Calu3 (cell line): ENCODE measurements at regions of chr13 and their contacts with region 1.

Region 1: DNA sequence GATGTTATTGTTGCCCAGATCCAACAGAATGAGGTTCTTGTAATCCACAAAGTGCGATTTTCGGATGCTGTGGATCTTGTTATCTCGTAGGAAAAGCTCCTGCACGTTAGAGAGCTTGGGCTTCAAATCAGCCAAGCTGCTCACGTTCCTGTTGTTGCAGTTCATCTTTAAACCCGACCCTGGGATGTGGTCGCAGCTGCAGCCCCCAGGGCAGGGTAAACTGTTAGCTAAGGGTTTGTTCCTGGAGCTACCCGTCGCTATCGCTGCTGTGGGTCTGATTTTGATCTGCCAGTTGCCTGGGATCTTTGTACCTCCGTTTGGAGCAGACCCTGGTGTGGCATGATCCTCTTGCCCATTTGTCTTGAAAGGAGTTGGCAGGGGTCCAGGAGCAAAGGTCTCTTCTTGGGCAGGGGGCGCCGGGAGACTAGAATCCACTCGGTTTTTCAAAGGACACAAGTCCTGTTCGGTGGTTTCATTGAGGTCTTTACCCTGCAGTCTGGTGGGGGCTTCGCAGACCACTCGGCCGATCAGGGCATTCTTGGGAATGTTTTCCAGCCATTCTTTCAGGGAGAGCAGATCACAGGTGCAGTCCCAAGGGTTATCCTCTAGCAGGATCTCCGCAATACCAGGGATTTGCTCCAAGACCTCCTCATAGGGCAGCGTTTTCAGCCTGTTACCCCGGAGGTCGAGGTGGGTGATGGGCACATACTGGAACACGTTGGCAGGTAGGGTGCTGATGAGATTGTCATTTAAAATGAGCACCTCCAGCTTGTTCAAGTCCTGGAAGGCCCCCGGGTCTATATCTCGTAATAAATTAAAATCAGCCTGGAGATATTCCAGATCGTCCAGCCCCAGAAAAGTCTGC is 1.8 kb downstream of the SLITRK1 start:
- DNase-seq: no peak
- H3K4me3 Mint-ChIP-seq: peak overlapping the region; percentile 14
- H3K27ac Mint-ChIP-seq: no peak overlapping the region
- H3K4me1 Mint-ChIP-seq: no peaks in the 10 kb centered on the region
- H3K27me3 Mint-ChIP-seq: no peaks in the 10 kb centered on the region
- CTCF ChIP-seq: no peak

Region 2: GRCh38 chr13:83761631-83762030 is 118.9 kb before region 1 on chr13:
- CTCF ChIA-PET with region 1: no interaction called
- intact Hi-C with region 1: no loop called
- DNase-seq: no peak
- H3K4me3 Mint-ChIP-seq: no peak overlapping the region
- H3K27ac Mint-ChIP-seq: no peak overlapping the region
- H3K4me1 Mint-ChIP-seq: no peaks in the 10 kb centered on the region
- H3K27me3 Mint-ChIP-seq: no peaks in the 10 kb centered on the region
- CTCF ChIP-seq: no peak

Region 3: GRCh38 chr13:83810136-83810535 is 70.4 kb before region 1 on chr13:
- CTCF ChIA-PET with region 1: interaction called, 13 read pairs
- intact Hi-C with region 1: no loop called
- DNase-seq: no peak
- H3K4me3 Mint-ChIP-seq: no peak overlapping the region
- H3K27ac Mint-ChIP-seq: no peak overlapping the region
- H3K4me1 Mint-ChIP-seq: no peaks in the 10 kb centered on the region
- H3K27me3 Mint-ChIP-seq: no peaks in the 10 kb centered on the region
- CTCF ChIP-seq: no peak

Region 4: GRCh38 chr13:83914368-83914767 is 33.9 kb after region 1 on chr13:
- CTCF ChIA-PET with region 1: no interaction called
- intact Hi-C with region 1: no loop called
- DNase-seq: no peak
- H3K4me3 Mint-ChIP-seq: no peak overlapping the region
- H3K27ac Mint-ChIP-seq: no peak overlapping the region
- H3K4me1 Mint-ChIP-seq: no peaks in the 10 kb centered on the region
- H3K27me3 Mint-ChIP-seq: no peaks in the 10 kb centered on the region
- CTCF ChIP-seq: no peak